Activated CD8-positive, alpha-beta T cell treated with anti-CD3 and anti-CD28 coated beads for 36 hours (primary cell): ENCODE measurements at regions of chr2 and their contacts with region 1.

Region 1: DNA sequence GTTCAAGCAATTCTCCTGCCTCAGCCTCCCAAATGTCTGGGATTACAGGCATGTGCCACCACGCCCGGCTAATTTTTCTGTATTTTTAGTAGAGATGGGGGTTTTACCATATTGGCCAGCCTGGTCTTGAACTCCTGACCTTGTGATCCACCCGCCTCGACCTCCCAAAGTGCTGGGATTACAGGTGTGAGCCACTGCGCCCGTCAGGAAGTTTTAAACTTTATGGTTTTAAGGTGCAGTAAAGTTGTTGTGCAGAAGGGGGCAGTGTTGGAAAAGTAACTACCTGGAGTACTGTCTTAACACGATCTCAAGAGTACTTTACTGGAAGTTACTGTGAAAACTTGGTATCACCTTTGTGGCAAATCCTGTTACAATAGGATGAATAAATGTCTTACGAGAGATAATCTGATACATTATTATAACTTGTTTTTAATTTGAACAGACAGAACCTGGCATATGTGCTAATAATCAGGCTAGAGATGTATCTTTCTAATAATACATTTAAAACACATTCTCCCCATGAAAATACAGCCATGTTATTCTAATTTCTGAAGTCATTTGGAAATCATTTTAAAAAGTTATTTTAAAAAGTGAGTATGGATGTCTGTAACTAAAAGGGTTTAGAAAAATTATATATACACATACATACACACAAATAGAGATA is 10.8 kb downstream of the SPDYA start:
- DNase-seq: peak; percentile 77
- ATAC-seq: peak; percentile 95
- H3K4me3 Mint-ChIP-seq: no peak overlapping the region
- H3K27ac Mint-ChIP-seq: no peak overlapping the region
- H3K4me1 Mint-ChIP-seq: peaks cover 7% of the 10 kb centered on the region
- H3K27me3 Mint-ChIP-seq: no peaks in the 10 kb centered on the region
- CTCF ChIP-seq: peak; percentile 79

Region 2: GRCh38 chr2:28810384-28811285 is 10.8 kb before region 1 on chr2 and contains the start of gene SPDYA:
- CTCF ChIA-PET with region 1: interaction called, 15 read pairs
- POLR2A ChIA-PET with region 1: interaction called, 6 read pairs
- intact Hi-C with region 1: no loop called
- DNase-seq: peak; percentile 83
- ATAC-seq: peak; percentile 96
- H3K4me3 Mint-ChIP-seq: peak within 1 kb of the TSS; percentile 67
- H3K27ac Mint-ChIP-seq: peak within 1 kb of the TSS; percentile 25
- H3K4me1 Mint-ChIP-seq: peaks cover 10% of the 10 kb centered on the region
- H3K27me3 Mint-ChIP-seq: peaks cover 1% of the 10 kb centered on the region
- CTCF ChIP-seq: no peak
- total RNA-seq, gene SPDYA: 1.3 to 1.4 TPM

Region 3: GRCh38 chr2:28952816-28953211 is 131.4 kb after region 1 on chr2:
- CTCF ChIA-PET with region 1: interaction called, 6 read pairs
- POLR2A ChIA-PET with region 1: no interaction called
- intact Hi-C with region 1: loop called (anchors 5 kb)
- DNase-seq: no peak
- ATAC-seq: no peak
- H3K4me3 Mint-ChIP-seq: no peak overlapping the region
- H3K27ac Mint-ChIP-seq: peak overlapping the region; percentile 26
- H3K4me1 Mint-ChIP-seq: peaks cover 7% of the 10 kb centered on the region
- H3K27me3 Mint-ChIP-seq: no peaks in the 10 kb centered on the region
- CTCF ChIP-seq: no peak

Region 4: GRCh38 chr2:29920130-29920577 is 1098.7 kb after region 1 on chr2:
- CTCF ChIA-PET with region 1: no interaction called
- POLR2A ChIA-PET with region 1: no interaction called
- intact Hi-C with region 1: no loop called
- DNase-seq: peak; percentile 57
- ATAC-seq: peak; percentile 48
- H3K4me3 Mint-ChIP-seq: no peak overlapping the region
- H3K27ac Mint-ChIP-seq: no peak overlapping the region
- H3K4me1 Mint-ChIP-seq: peaks cover 8% of the 10 kb centered on the region
- H3K27me3 Mint-ChIP-seq: peaks cover 55% of the 10 kb centered on the region
- CTCF ChIP-seq: no peak